IMR-90 (cell line): ENCODE measurements at regions of chr15 and their contacts with region 1.

Region 1: GRCh38 chr15:67134067-67134838 is 68.9 kb downstream of the SMAD3 start:
- DNase-seq: peak; percentile 82
- ATAC-seq: peak; percentile 6
- H3K4me3 ChIP-seq: no peak overlapping the region
- H3K27ac ChIP-seq: peak overlapping the region; percentile 96
- H3K4me1 ChIP-seq: peaks cover 71% of the 10 kb centered on the region
- H3K27me3 ChIP-seq: no peaks in the 10 kb centered on the region
- CTCF ChIP-seq: no peak
- POLR2A ChIP-seq: peak; percentile 48; the same call in 1 of the 2 replicates
- RAD21 ChIP-seq: no peak; the same call in 1 of the 2 replicates

Region 2: GRCh38 chr15:67175643-67176071 is 41.4 kb after region 1 on chr15:
- CTCF ChIA-PET with region 1: interaction called, 3 read pairs
- POLR2A ChIA-PET with region 1: no interaction called
- dilution Hi-C with region 1: no loop called
- in situ Hi-C with region 1: no loop called
- intact Hi-C with region 1: loop called (anchors 2 kb)
- DNase-seq: peak; percentile 69
- ATAC-seq: no peak
- H3K4me3 ChIP-seq: no peak overlapping the region
- H3K27ac ChIP-seq: peak overlapping the region; percentile 78
- H3K4me1 ChIP-seq: peaks cover 74% of the 10 kb centered on the region
- H3K27me3 ChIP-seq: no peaks in the 10 kb centered on the region
- CTCF ChIP-seq: no peak
- POLR2A ChIP-seq: no peak
- RAD21 ChIP-seq: no peak